OCI-LY7 (cell line): ENCODE measurements at regions of chr20 and their contacts with region 1.

Region 1: GRCh38 chr20:38633577-38634093 is 32.0 kb downstream of the ARHGAP40 start:
- DNase-seq: peak; percentile 70
- H3K4me3 ChIP-seq: no peak overlapping the region
- H3K27ac ChIP-seq: no peak overlapping the region
- H3K4me1 ChIP-seq: no peaks in the 10 kb centered on the region
- CTCF ChIP-seq: peak; percentile 89

Region 2: GRCh38 chr20:38730989-38731737 is 97.5 kb after region 1 on chr20:
- CTCF ChIA-PET with region 1: no interaction called
- POLR2A ChIA-PET with region 1: no interaction called
- intact Hi-C with region 1: loop called (anchors 5 kb)
- DNase-seq: peak; percentile 81
- H3K4me3 ChIP-seq: peak overlapping the region; percentile 70
- H3K27ac ChIP-seq: peak overlapping the region; percentile 17
- H3K4me1 ChIP-seq: peaks cover 4% of the 10 kb centered on the region
- CTCF ChIP-seq: peak; percentile 97